ENCODE measurements at regions of chr4 and their contacts with region 1.

Region 1: GRCh38 chr4:97513917-97514316 is 629.4 kb downstream of the STPG2 start:
- DNase-seq: no peak
- ATAC-seq: no peak

Region 2: GRCh38 chr4:97498875-97499274 is 15.0 kb before region 1 on chr4:
- intact Hi-C with region 1: loop called (anchors 2 kb)
- DNase-seq: no peak
- ATAC-seq: no peak

Measured in Right ventricle myocardium inferior (tissue), 1 donor.